WTC11 (cell line): ENCODE measurements at regions of chr16 and their contacts with region 1.

Region 1: DNA sequence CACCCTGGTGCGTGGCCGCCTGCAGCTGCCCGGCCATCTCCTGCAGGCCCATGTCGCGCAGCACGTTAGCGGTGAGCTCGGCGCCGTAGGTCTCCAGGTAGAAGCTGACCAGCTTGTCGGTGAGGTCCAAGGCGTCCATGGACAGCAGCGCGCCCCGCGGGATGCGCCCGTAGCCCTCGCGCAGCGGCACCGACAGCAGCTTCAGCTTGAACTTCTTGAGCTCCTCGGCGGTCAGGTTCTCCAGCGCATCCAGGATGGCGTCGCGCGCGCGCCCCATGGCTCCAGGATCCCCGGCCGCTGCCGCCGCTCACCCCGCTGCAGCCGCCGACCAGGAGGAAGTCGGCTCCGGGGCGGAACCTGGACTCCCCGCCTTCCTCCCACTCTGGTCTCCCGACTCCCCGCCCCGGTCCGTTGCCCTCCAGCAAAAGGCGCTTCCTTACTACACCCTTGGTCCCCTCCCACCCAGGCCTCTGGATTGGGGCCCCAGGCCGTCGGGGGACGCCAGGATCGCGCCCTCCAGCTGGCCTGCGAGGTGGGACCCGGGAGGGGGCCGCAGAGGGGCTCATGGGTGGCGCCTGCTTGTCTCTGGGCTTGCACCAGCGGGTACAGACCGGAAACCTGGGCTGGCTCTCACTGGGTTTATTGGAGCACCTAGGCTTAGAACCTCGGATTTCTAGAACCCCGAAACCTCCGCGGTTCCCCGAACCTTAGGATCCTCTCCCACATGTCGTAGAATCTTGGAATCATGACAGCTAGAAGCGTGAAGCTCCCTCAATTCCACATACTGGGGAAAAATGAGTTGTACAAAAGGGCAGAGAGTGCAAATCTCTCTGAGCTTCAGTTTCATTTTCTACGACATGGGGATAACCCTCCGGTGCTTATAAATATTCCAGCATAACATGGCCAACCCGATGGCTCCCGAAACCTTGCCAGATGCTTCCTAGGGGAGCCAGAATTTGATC is at the start of gene PYCARD:
- DNase-seq: peak; percentile 57
- ATAC-seq: peak; percentile 11
- H3K4me3 Mint-ChIP-seq: peak within 1 kb of the TSS; percentile 83
- H3K27ac Mint-ChIP-seq: no peak within 1 kb of the TSS; the same call in 1 of the 2 replicates
- H3K4me1 Mint-ChIP-seq: peaks cover 23% of the 10 kb centered on the region
- H3K27me3 Mint-ChIP-seq: peaks cover 26% of the 10 kb centered on the region
- CTCF ChIP-seq: no peak
- total RNA-seq, gene PYCARD: 35.2 to 45.5 TPM (median 42.4 TPM) in 3 replicates

Region 2: GRCh38 chr16:30075507-30076275 is 1127.0 kb before region 1 on chr16 and contains the start of gene PPP4C:
- CTCF ChIA-PET with region 1: no interaction called
- POLR2A ChIA-PET with region 1: no interaction called
- DNase-seq: peak; percentile 90
- ATAC-seq: peak; percentile 84
- H3K4me3 Mint-ChIP-seq: peak within 1 kb of the TSS; percentile 89
- H3K27ac Mint-ChIP-seq: peak within 1 kb of the TSS; percentile 97
- H3K4me1 Mint-ChIP-seq: peaks cover 22% of the 10 kb centered on the region
- H3K27me3 Mint-ChIP-seq: no peaks in the 10 kb centered on the region
- CTCF ChIP-seq: no peak
- total RNA-seq, gene PPP4C: 159 to 164 TPM (median 161 TPM) in 3 replicates

Region 3: GRCh38 chr16:30922960-30923535 is 279.6 kb before region 1 on chr16:
- CTCF ChIA-PET with region 1: no interaction called
- POLR2A ChIA-PET with region 1: no interaction called
- DNase-seq: peak; percentile 99
- ATAC-seq: peak; percentile 60
- H3K4me3 Mint-ChIP-seq: peak overlapping the region; percentile 99
- H3K27ac Mint-ChIP-seq: peak overlapping the region; percentile 100
- H3K4me1 Mint-ChIP-seq: peaks cover 20% of the 10 kb centered on the region
- H3K27me3 Mint-ChIP-seq: no peaks in the 10 kb centered on the region; the same call in 1 of the 2 replicates
- CTCF ChIP-seq: no peak

Region 4: GRCh38 chr16:31044190-31044481 is 158.6 kb before region 1 on chr16:
- CTCF ChIA-PET with region 1: no interaction called
- POLR2A ChIA-PET with region 1: no interaction called
- DNase-seq: no peak
- ATAC-seq: no peak
- H3K4me3 Mint-ChIP-seq: no peak overlapping the region
- H3K27ac Mint-ChIP-seq: no peak overlapping the region
- H3K4me1 Mint-ChIP-seq: peaks cover 5% of the 10 kb centered on the region; the same call in 1 of the 2 replicates
- H3K27me3 Mint-ChIP-seq: peaks cover 5% of the 10 kb centered on the region; the same call in 1 of the 2 replicates
- CTCF ChIP-seq: no peak

Region 5: DNA sequence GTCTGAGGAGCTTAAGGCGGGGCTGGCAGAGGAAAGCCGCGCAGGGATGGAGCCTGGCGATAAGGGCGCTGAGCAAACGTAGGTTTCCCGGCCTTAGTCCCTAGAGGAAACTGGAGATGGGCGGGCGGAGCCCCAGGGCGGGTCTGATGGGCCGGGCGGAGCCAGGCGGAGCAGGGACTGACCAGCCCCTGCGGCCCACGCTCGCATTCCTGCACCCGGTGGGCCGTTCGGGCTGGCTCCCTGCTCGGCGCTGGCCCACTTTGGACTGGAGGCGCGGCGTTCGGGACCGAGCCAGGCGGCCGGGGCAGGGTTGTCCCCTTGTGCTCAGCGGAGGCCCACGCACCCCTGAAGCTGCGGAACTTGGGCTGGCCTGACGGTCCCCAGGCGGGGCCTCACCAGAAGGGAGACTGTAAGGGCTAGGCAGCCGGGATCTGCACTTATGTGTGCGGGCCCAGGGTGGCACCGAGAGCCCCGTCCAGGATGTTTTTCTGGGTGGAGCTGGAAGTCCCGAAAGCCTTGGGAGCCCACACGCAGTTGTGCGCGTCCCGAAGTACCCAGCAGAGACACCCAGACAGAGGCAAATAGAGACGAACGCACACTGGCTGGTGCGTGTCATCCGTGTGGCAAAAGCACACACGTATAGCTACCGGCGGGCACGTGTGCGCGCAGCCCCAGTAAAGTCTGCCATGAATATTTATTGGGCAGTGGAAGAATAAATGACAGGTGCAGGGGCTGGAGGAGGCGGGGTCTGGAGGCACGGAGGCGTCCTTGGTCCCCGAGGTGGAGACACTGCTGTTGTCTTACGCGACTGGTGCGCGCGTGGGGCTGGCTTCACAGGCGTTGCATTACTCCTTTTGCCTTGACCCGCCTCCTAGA is 12.8 kb after region 1 on chr16:
- CTCF ChIA-PET with region 1: interaction called, 23 read pairs
- POLR2A ChIA-PET with region 1: interaction called, 11 read pairs
- DNase-seq: peak; percentile 89
- ATAC-seq: peak; percentile 85
- H3K4me3 Mint-ChIP-seq: peak overlapping the region; percentile 77
- H3K27ac Mint-ChIP-seq: no peak overlapping the region
- H3K4me1 Mint-ChIP-seq: peaks cover 30% of the 10 kb centered on the region
- H3K27me3 Mint-ChIP-seq: peaks cover 57% of the 10 kb centered on the region
- CTCF ChIP-seq: no peak

Region 6: GRCh38 chr16:31333686-31334649 is 131.3 kb after region 1 on chr16:
- CTCF ChIA-PET with region 1: interaction called, 21 read pairs
- POLR2A ChIA-PET with region 1: no interaction called
- DNase-seq: peak; percentile 54
- ATAC-seq: peak; percentile 86
- H3K4me3 Mint-ChIP-seq: no peak overlapping the region
- H3K27ac Mint-ChIP-seq: no peak overlapping the region
- H3K4me1 Mint-ChIP-seq: peaks cover 17% of the 10 kb centered on the region
- H3K27me3 Mint-ChIP-seq: peaks cover 61% of the 10 kb centered on the region
- CTCF ChIP-seq: no peak